ENCODE measurements at regions of chr12 and their contacts with region 1.

Region 1: GRCh38 chr12:27779920-27780611 is at the starts of genes KLHL42 and MANSC4:
- DNase-seq: peak; percentile 89
- H3K4me3 ChIP-seq: peak within 1 kb of the TSS; percentile 69 to 79 (median 71)
- H3K27ac ChIP-seq: peak within 1 kb of the TSS; percentile 86 to 98 (median 94)
- H3K4me1 ChIP-seq: peaks cover 0 to 54% (median 45%) of the 10 kb centered on the region in 4 donors
- H3K27me3 ChIP-seq: no peaks in the 10 kb centered on the region
- CTCF ChIP-seq: no peak
- EP300 ChIP-seq: no peak
- POLR2A ChIP-seq: peak; percentile 16 to 50
- total RNA-seq, gene KLHL42: 60.7 to 78.1 (median 65.6) TPM
- total RNA-seq, gene MANSC4: not detected

Region 2: GRCh38 chr12:27751386-27752047 is 28.5 kb before region 1 on chr12:
- intact Hi-C with region 1: loop called (anchors 2 kb)
- DNase-seq: no peak
- H3K4me3 ChIP-seq: no peak overlapping the region
- H3K27ac ChIP-seq: no peak overlapping the region
- H3K4me1 ChIP-seq: peaks cover 0 to 22% (median 18%) of the 10 kb centered on the region in 4 donors
- H3K27me3 ChIP-seq: no peaks in the 10 kb centered on the region
- CTCF ChIP-seq: no peak
- EP300 ChIP-seq: no peak
- POLR2A ChIP-seq: no peak